ENCODE measurements at regions of chr14 and their contacts with region 1.

Region 1: GRCh38 chr14:77799863-77800730 is at the start of gene ADCK1:
- DNase-seq: peak; percentile 93
- H3K4me3 ChIP-seq: peak within 1 kb of the TSS; percentile 67 to 96 (median 78)
- H3K27ac ChIP-seq: peak within 1 kb of the TSS; percentile 86 to 93 (median 90)
- H3K4me1 ChIP-seq: peaks cover 0 to 15% (median 3%) of the 10 kb centered on the region in 4 donors
- H3K27me3 ChIP-seq: no peaks in the 10 kb centered on the region
- CTCF ChIP-seq: peak; percentile 28 to 53 (median 44)
- EP300 ChIP-seq: no peak
- POLR2A ChIP-seq: no peak
- total RNA-seq, gene ADCK1: 4.6 to 19.4 (median 5.8) TPM

Region 2: DNA sequence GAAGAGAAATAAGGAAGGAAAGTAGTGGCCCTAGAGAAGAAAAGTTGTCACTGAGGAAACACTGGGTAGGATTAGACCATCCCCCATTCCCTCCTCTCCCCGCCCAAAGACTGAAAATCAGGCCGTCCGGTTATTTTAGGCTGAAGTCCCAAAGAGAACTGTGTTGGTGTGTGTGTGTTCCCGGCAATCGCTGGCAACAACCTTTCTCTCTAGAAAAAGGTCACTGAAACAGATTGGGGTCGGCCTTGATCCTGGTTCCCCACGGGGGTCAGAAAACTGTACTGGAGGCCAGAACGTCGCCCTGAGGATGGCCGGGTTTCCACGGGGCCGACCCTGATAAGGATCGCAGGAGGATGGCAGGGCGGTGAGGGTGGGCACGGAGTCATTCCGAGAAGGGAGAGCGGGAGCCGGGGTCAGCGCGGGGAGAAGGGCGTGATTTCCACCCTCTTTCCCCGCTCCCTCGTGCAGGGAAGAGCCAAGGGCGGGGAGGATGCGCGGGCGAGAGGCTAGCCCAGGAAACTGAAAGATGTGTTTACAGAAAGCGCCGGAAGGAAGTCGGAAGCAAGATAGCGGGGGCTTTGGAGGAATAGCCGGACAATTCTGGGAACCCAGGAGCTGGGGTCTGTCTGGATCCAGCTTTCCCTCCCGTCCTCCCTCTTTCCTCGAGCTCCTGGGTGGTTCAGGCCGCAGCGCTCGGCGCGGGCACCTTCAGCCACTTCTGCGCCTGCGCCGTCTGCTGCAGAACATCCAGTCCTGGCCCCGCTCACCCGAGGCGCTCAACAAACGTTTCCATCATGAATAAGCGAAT is 158.4 kb before region 1 on chr14:
- intact Hi-C with region 1: loop called (anchors 10 kb)
- DNase-seq: peak; percentile 89
- H3K4me3 ChIP-seq: peak overlapping the region; percentile 9 to 49 (median 48)
- H3K27ac ChIP-seq: peak overlapping the region; percentile 72 to 76 (median 75)
- H3K4me1 ChIP-seq: peaks cover 0 to 18% (median 12%) of the 10 kb centered on the region in 4 donors
- H3K27me3 ChIP-seq: no peaks in the 10 kb centered on the region
- CTCF ChIP-seq: no peak
- EP300 ChIP-seq: no peak
- POLR2A ChIP-seq: peak; percentile 19 to 28

Region 3: DNA sequence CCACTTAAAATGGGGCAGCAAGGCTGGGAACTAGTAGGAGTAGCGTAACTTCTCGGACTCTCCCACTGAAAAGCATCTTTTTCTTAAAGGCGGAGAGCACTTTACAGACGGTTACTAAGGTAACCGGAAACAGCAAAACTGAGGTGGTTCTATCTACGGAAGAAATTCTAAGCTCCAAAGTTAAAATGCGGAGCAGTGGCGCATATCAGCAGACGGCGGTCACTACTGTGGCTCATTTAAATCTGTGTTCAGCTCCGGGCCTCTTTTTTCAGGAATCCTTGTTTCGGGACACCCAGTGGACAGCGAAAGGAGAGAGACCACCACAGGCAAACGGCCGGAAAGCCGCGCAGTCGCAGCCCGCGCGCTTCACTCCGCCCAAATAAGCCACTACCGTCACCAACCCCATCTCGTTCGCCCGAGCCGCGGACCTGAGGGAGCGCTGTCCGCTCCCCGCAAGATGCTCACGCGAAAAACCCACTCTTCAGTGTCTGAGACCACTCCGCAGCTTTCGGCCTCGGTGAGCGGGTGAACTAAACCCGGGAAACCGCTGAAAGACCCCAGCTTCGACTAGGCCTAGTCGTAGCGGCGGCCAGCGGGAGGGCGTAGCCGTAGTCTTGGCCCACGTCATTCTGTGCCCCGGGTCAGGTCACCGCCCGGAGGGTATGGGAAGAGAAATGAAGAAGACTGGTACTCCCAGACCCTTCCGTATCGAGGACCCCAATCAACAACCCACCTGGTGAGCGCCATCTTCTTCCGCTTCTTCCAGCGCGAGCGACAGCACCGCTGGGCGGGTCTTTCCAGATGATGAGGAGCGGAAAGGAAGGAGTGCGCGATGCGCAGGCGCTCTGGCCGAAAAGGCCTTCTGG is 39.5 kb before region 1 on chr14 and contains the start of gene SNW1:
- intact Hi-C with region 1: loop called (anchors 1 kb)
- DNase-seq: peak; percentile 97
- H3K4me3 ChIP-seq: peak within 1 kb of the TSS; percentile 80 to 96 (median 90)
- H3K27ac ChIP-seq: peak within 1 kb of the TSS; percentile 90 to 95 (median 94)
- H3K4me1 ChIP-seq: peaks cover 0 to 41% (median 31%) of the 10 kb centered on the region in 4 donors
- H3K27me3 ChIP-seq: no peaks in the 10 kb centered on the region
- CTCF ChIP-seq: no peak
- EP300 ChIP-seq: no peak
- POLR2A ChIP-seq: peak; percentile 64 to 72
- total RNA-seq, gene SNW1: 42.0 to 54.3 (median 46.0) TPM

Region 4: GRCh38 chr14:77838831-77839511 is 38.9 kb after region 1 on chr14:
- intact Hi-C with region 1: no loop called
- DNase-seq: no peak
- H3K4me3 ChIP-seq: no peak overlapping the region
- H3K27ac ChIP-seq: no peak overlapping the region
- H3K4me1 ChIP-seq: no peaks in the 10 kb centered on the region
- H3K27me3 ChIP-seq: no peaks in the 10 kb centered on the region
- CTCF ChIP-seq: no peak
- EP300 ChIP-seq: no peak
- POLR2A ChIP-seq: no peak

Region 5: GRCh38 chr14:77862154-77862786 is 62.2 kb after region 1 on chr14:
- intact Hi-C with region 1: no loop called
- DNase-seq: peak; percentile 74
- H3K4me3 ChIP-seq: no peak overlapping the region
- H3K27ac ChIP-seq: no peak overlapping the region
- H3K4me1 ChIP-seq: no peaks in the 10 kb centered on the region
- H3K27me3 ChIP-seq: no peaks in the 10 kb centered on the region
- CTCF ChIP-seq: peak; percentile 28 to 88 (median 71)
- EP300 ChIP-seq: no peak
- POLR2A ChIP-seq: no peak

Region 6: GRCh38 chr14:77892381-77892871 is 92.3 kb after region 1 on chr14:
- intact Hi-C with region 1: no loop called
- DNase-seq: no peak
- H3K4me3 ChIP-seq: no peak overlapping the region
- H3K27ac ChIP-seq: no peak overlapping the region
- H3K4me1 ChIP-seq: no peaks in the 10 kb centered on the region
- H3K27me3 ChIP-seq: no peaks in the 10 kb centered on the region
- CTCF ChIP-seq: no peak
- EP300 ChIP-seq: no peak
- POLR2A ChIP-seq: no peak